ENCODE measurements at regions of chr9 and their contacts with region 1.

Region 1: GRCh38 chr9:97615439-97616072 is 17.6 kb downstream of the TSTD2 start:
- DNase-seq: peak; percentile 64 to 69
- ATAC-seq: peak; percentile 68 to 84; a peak in 4 of 6 replicates
- H3K4me3 ChIP-seq: no peak overlapping the region
- H3K27ac ChIP-seq: no peak overlapping the region
- H3K4me1 ChIP-seq: no peaks in the 10 kb centered on the region
- CTCF ChIP-seq: peak; percentile 88
- EP300 ChIP-seq: no peak
- POLR2A ChIP-seq: no peak
- RAD21 ChIP-seq: peak; percentile 74 to 81

Region 2: DNA sequence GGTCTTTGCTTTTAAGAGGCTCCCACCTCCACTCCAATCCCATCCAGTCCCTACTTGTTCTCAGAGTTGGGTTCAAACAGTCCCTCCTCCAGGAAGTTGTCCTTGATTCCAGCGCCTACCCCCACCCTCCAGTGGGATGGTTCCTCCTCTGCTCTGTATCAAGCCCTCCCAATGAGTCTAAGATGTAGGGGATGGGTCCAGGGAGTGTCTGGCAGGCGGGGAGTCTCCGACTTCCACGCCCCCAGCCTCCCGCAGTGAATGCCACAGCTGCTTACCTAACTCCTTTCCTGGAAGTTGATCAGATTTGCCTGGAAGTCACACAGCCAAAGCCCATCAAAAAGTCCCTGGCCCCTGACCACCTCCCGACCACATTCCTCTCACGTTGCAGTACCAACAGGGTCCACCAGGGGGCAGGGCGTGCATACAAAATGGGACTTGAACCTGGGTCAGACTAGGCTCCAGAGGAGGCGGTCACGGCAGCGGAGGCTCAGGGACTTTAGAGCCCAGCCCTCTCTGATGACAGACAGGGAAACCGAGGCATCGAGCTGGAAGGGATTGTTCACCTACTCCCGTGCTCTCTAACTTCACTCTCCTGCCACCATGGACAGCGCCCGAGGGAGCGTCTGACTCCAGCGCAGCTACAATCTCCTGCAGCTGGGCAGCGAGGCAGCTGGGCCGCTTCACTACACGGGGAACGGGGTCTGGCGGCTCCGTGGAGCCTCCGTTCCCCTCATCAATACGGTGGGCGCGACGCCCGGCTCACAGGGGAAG is 228.6 kb before region 1 on chr9:
- CTCF ChIA-PET with region 1: interaction called, 36 read pairs
- POLR2A ChIA-PET with region 1: no interaction called
- DNase-seq: peak; percentile 47 to 77
- ATAC-seq: peak in 1 of 2 experiments; percentile 84; a peak in 3 of 6 replicates
- H3K4me3 ChIP-seq: no peak overlapping the region
- H3K27ac ChIP-seq: no peak overlapping the region
- H3K4me1 ChIP-seq: peaks cover 30% of the 10 kb centered on the region
- CTCF ChIP-seq: peak; percentile 83
- EP300 ChIP-seq: no peak
- POLR2A ChIP-seq: no peak
- RAD21 ChIP-seq: peak; percentile 79 to 92

Region 3: DNA sequence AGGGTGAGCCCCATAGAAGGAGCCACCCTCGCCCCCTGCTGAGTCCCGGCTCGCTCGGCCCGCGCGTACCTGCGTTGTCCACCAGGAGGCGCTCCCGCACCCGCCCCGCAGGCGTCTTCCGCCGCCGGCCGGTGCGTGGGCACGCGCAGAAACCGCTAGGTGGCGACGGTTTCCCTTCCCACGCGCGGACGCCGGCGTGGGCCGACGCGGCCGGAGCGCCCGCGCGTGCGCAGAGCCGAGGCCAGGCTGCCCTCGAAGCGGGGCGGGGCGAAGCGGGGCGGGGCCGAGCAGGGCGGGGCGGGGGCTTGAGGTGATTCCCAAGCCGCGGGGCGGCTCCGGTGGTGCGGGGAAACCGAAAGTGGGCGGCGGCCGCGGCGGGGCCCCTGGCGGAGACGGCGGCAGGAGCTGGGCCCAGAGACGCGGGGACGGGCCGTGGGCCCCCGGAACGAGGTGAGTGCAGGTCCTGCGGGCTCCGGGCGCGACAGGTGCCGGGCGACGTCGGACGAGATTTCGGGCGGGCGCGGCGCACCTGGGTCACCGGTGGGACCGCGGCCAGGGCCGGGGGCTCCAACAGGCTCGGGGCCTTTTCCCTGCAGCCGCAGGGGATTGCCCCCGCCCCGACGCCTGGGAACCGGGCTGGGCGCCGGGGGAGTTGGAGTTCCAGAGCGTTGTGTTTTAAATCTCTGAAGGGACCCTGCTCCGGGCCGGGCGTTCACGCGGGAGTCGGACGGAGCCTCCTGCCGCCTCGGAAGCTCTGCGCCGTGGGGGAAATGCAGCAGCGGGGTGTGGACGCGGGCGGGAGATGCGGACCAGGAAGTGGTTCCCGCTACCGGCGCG is 203.5 kb before region 1 on chr9 and contains the start of gene TDRD7:
- CTCF ChIA-PET with region 1: interaction called, 25 read pairs
- POLR2A ChIA-PET with region 1: no interaction called
- DNase-seq: peak; percentile 76 to 83
- ATAC-seq: peak; percentile 86 to 90
- H3K4me3 ChIP-seq: peak within 1 kb of the TSS; percentile 100
- H3K27ac ChIP-seq: peak within 1 kb of the TSS; percentile 88 to 93
- H3K4me1 ChIP-seq: peaks cover 9% of the 10 kb centered on the region; the same call in 2 of the 3 replicates
- CTCF ChIP-seq: peak; percentile 99
- EP300 ChIP-seq: no peak
- POLR2A ChIP-seq: no peak
- RAD21 ChIP-seq: peak; percentile 60 to 83
- polyA plus RNA-seq, gene TDRD7: 15.7 and 18.3 TPM in 2 replicates

Region 4: DNA sequence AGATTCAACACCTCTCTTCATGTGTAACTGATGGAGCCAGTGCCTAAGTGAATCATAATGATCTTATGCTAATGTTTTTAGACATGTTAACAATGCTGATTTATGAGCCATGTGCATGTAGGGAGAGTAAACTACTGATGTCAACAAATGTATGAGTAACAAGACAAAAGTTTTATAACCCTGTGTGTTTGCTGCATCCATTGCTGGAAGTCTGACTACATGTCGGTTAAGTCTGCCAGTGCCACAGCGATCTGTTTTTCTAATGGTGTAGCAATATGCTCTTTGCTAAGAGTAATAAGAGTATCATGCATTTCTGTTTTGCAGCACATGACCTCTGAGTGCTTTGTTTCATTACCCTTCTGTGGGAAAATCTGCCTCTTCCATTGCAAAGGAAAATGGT is 140.5 kb before region 1 on chr9:
- CTCF ChIA-PET with region 1: interaction called, 247 read pairs
- POLR2A ChIA-PET with region 1: no interaction called
- DNase-seq: no peak
- ATAC-seq: no peak
- H3K4me3 ChIP-seq: no peak overlapping the region
- H3K27ac ChIP-seq: no peak overlapping the region
- H3K4me1 ChIP-seq: no peaks in the 10 kb centered on the region
- CTCF ChIP-seq: no peak
- EP300 ChIP-seq: no peak
- POLR2A ChIP-seq: no peak
- RAD21 ChIP-seq: no peak

Region 5: DNA sequence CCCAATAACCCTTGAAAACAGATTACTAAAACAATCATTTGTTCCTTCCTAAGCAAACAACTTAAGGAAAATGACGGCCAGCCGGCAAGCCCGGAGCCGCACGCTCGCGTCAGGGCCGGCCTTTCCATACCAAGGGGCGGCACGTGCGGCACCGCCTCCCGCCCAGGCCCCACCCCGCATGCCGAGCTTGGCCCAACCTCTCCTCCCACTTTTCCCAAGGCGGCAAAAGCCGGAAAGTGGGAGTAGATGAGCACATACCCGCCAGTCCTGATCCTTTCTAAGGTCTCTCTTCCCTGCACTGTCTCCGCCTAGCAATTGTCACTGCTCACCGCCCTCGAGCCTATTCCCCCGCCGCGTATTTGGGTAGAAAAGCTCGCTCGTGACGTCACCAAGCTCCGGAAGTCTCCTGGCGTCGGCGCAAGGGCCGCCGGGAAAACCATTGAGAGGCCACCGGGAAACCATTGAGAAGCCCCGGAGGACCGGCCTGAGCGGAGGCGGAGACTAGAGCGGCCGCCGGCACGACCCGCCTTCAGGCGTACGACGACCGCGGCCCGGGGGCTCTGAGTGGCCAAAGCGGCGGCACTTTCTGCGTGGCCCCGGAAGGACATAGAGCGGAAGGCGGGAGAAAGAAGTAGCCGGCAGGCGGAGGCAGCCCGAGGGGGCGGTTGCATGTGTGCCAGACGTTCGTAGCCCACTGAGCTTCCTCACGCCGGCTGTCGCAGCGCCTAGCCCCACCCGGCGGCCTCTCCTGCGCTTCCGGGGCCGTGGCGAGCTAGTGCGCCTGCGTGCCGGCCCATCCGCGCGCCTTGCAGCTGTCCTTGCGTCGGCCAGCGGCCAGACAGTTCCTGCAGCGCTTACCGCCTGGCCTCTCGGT is 17.7 kb after region 1 on chr9 and contains the starts of genes NCBP1 and TSTD2:
- CTCF ChIA-PET with region 1: interaction called, 19 read pairs
- POLR2A ChIA-PET with region 1: interaction called, 10 read pairs
- DNase-seq: peak; percentile 91 to 98
- ATAC-seq: peak; percentile 91 to 97
- H3K4me3 ChIP-seq: peak within 1 kb of the TSS; percentile 96
- H3K27ac ChIP-seq: peak within 1 kb of the TSS; percentile 93 to 96
- H3K4me1 ChIP-seq: peaks cover 38% of the 10 kb centered on the region
- CTCF ChIP-seq: no peak
- EP300 ChIP-seq: no peak
- POLR2A ChIP-seq: peak; percentile 96
- RAD21 ChIP-seq: no peak
- polyA plus RNA-seq, gene NCBP1: 43.4 and 48.2 TPM in 2 replicates
- polyA plus RNA-seq, gene TSTD2: 33.3 and 37.4 TPM in 2 replicates

Measured in A549 (cell line).